Activated CD4-positive, alpha-beta memory T cell treated with anti-CD3 and anti-CD28 coated beads for 36 hours (primary cell): ENCODE measurements at regions of chr3 and their contacts with region 1.

Region 1: DNA sequence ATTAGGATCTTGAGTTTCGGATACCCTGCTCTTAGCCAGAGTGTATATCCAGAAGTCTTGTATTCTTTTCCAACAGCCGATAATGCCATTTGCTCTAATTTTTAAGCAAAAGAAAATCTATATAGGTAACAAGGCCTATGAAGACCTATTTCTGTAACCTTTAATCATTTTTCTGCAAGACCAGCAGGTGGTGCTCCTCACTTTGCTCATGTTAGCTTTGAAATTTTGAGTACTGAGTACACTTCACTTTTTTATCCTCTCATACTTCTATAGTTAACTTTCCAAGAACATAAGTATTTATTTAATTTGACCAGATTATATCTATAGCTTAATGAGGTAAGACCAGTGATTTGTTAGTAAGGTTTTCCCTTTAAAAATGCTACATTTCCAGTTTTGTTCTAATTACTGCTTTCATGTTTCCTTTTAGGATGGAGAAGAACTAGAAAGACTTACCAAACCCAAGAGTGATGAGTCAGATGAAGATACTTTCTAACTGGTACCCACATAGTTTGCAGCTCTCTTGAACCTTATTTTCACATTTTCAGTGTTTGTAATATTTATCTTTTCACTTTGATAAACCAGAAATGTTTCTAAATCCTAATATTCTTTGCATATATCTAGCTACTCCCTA is 20.5 kb downstream of the SLC35A5 start:
- DNase-seq: peak; percentile 56
- H3K4me3 Mint-ChIP-seq: no peak overlapping the region
- H3K27ac Mint-ChIP-seq: no peak overlapping the region
- H3K4me1 Mint-ChIP-seq: peaks cover 5% of the 10 kb centered on the region
- H3K27me3 Mint-ChIP-seq: no peaks in the 10 kb centered on the region

Region 2: GRCh38 chr3:112568642-112569041 is 13.7 kb before region 1 on chr3:
- CTCF ChIA-PET with region 1: interaction called, 12 read pairs
- POLR2A ChIA-PET with region 1: no interaction called
- intact Hi-C with region 1: no loop called
- DNase-seq: no peak
- H3K4me3 Mint-ChIP-seq: no peak overlapping the region
- H3K27ac Mint-ChIP-seq: no peak overlapping the region
- H3K4me1 Mint-ChIP-seq: peaks cover 9% of the 10 kb centered on the region
- H3K27me3 Mint-ChIP-seq: no peaks in the 10 kb centered on the region

Region 3: DNA sequence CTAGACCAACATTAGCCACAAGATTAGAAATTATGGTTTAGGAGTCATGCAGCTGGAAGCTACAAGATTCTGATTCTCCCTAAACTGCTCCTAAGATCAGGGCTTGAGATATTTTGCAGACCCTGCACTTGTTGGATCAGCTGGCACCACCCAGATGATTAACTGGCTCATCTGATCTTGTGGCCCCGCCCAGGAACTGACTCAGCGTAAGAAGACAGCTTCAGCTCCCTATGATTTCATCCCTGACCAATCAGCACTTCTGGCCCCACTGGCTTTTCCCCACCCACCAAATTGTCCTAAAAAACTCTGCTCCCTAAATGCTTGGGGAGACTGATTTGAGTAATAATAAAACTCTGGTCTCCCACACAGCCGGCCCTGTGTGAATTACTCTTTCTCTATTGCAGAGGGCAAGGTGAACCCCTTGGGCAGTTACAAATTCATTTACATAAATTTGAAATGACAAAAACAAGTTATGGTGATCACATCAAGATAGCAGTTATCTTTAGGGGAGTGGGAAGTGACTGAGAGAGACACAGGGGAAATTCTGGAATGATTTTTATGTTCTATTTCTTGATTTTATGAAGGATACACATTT is 187.8 kb after region 1 on chr3:
- CTCF ChIA-PET with region 1: no interaction called
- POLR2A ChIA-PET with region 1: no interaction called
- intact Hi-C with region 1: no loop called
- DNase-seq: peak; percentile 81
- H3K4me3 Mint-ChIP-seq: peak overlapping the region; percentile 12
- H3K27ac Mint-ChIP-seq: peak overlapping the region; percentile 88
- H3K4me1 Mint-ChIP-seq: peaks cover 50% of the 10 kb centered on the region
- H3K27me3 Mint-ChIP-seq: no peaks in the 10 kb centered on the region

Region 4: DNA sequence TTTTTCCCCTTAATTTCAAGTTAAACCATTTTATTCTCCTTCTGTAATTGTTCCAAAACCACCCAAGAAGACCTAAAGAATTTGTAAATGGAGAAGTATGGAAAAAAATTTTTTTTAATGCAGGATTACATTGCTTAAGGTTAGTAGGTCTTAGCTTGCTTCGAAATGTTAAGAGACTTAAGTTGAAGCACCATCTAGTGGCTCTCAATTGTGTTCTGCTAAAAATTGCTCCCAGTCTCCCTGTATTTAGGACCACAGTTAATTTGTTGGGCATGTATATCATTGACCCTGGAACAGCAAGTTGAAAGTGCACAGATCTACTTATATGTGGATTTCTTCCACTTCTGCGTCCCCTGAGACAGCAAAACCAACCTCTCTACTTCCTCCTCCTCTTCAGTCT is 231.9 kb after region 1 on chr3:
- CTCF ChIA-PET with region 1: interaction called, 3 read pairs
- POLR2A ChIA-PET with region 1: no interaction called
- intact Hi-C with region 1: loop called (anchors 1 kb)
- DNase-seq: no peak
- H3K4me3 Mint-ChIP-seq: no peak overlapping the region
- H3K27ac Mint-ChIP-seq: no peak overlapping the region
- H3K4me1 Mint-ChIP-seq: peaks cover 20% of the 10 kb centered on the region
- H3K27me3 Mint-ChIP-seq: no peaks in the 10 kb centered on the region